ENCODE measurements at regions of chr11 and their contacts with region 1.

Region 1: DNA sequence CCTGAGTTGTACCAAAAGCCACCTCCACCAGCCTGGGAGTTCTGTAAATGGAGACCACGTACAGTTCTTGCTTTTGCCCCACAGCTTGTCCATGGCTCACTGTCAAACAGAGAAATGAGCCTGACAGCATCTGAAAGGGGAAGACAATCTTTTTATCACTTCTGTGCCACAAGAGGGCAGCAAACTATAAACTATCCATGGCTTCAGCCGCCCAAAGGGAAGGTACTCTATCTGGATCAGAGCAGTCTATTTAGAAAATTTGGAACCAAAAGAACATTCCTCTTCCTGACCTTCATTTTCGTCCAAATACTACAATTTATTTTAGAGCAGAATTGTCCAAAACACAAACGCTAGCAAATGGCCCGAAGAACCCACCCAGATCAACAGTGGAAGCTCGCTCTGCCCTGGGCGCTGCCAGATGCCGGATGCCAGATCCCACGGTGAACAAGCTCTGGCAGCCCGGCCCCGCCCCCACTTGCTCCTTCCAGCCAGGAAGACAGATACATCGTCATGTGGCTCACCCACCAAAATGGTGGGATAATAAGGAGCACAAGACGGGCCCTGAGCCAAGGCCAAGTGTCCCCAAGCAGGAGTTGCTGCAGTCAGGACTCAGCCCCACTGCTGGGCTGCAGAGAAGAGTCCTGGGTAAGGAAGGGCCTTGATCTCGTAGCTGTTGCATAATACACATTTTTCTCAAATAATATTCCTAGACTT is 23.9 kb upstream of the SCGB1A1 start:
- DNase-seq: peak; percentile 73
- H3K4me3 ChIP-seq: peak overlapping the region; percentile 51
- H3K27ac ChIP-seq: no peak overlapping the region
- H3K27me3 ChIP-seq: no peaks in the 10 kb centered on the region
- CTCF ChIP-seq: peak; percentile 66

Region 2: DNA sequence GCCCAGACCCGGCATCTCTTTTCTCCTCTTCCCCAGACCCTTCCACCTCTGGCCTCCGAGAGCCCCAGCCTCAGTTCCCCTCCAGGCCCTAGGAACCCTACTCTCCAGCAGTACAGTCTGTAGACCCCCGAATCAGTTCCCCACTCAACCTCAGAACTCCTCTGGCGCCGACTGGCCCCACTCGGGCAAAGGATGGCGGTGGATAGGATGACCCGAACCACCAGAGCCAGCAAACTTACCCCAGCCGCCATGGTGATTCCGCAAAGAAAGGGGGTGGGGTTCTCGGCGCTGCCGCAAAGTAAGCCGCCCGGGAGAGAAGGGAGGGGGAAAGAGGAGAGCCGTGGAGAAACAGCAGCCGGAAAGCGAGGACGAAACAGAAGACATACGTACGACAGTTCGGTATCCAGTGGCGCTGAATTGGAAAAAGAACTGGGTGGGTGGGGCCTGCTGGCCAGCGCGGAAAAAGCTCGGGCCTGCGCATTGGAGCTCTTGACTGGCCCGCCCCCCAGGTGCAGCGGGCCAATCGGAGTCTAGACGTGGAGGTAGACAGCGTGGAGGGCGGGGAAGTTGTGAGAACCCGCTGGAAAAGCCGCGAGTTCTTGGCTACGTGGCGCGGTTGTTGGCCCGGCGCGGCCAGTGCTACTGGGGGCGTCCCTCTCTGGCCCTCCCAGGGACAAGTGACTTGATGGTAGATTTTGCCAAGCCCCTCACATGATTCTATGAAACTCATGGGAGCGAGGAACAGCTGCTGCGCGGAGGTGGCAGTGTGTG is 178.8 kb after region 1 on chr11 and contains the start of gene EEF1G:
- in situ Hi-C with region 1: loop called (anchors 25 kb)
- DNase-seq: peak; percentile 100
- H3K4me3 ChIP-seq: peak within 1 kb of the TSS; percentile 98
- H3K27ac ChIP-seq: peak within 1 kb of the TSS; percentile 90
- H3K27me3 ChIP-seq: no peaks in the 10 kb centered on the region
- CTCF ChIP-seq: no peak

Measured in brain microvascular endothelial cell (primary cell).